Ascending aorta (tissue), 2 donors: ENCODE measurements at regions of chr19 and their contacts with region 1.

Region 1: DNA sequence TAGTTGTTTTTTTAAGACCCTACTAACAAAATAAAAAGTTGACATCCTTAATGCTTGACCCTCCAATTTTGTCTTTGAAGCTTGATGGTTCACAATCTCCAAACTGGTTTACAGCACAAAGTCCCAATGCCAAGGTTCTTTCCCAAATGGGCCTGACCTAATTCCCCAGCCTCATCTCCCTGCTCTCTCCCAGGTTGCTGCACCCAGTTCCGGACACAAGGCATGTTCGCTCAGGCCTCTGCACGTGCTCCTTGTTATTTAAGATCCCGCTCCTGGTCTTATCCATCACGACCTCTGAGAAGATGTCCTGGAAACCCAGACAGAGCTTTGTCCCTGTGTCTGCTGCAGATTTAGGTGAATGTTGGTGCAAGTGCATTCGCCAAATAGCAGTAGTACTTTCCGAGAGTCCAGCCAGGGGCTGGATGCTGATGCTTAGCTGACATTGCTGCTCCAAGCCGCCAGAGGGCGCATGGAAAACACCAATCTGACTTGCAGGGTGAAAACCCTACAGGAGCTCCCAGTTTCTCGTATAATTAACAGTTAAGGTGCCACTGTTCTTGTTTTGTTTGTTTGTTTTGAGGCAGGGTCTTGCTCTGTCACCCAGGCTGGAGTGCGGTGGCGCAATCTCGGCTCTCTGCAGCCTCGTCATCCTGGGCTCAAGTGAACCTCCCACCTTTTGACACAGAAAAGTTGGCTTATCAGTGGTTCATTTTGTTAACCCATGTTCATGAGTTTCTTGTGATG is 18.5 kb downstream of the LYPD3 start:
- DNase-seq: peak; percentile 18 to 76
- H3K4me3 ChIP-seq: no peak overlapping the region
- H3K27ac ChIP-seq: no peak overlapping the region
- H3K4me1 ChIP-seq: no peaks in the 10 kb centered on the region
- H3K27me3 ChIP-seq: no peaks in the 10 kb centered on the region
- CTCF ChIP-seq: peak; percentile 91 to 95 (median 93)

Region 2: GRCh38 chr19:43408043-43408442 is 38.9 kb before region 1 on chr19:
- intact Hi-C with region 1: no loop called
- DNase-seq: no peak
- H3K4me3 ChIP-seq: no peak overlapping the region
- H3K27ac ChIP-seq: no peak overlapping the region
- H3K4me1 ChIP-seq: no peaks in the 10 kb centered on the region
- H3K27me3 ChIP-seq: no peaks in the 10 kb centered on the region
- CTCF ChIP-seq: no peak

Region 3: GRCh38 chr19:43519436-43520088 is 72.6 kb after region 1 on chr19:
- intact Hi-C with region 1: loop called (anchors 1 kb)
- DNase-seq: peak in 1 of 2 donors; percentile 83
- H3K4me3 ChIP-seq: no peak overlapping the region
- H3K27ac ChIP-seq: no peak overlapping the region
- H3K4me1 ChIP-seq: peaks cover 0 to under 1% of the 10 kb centered on the region in 2 donors
- H3K27me3 ChIP-seq: no peaks in the 10 kb centered on the region
- CTCF ChIP-seq: peak; percentile 75 to 89 (median 85)

Region 4: GRCh38 chr19:43651758-43652545 is 205.0 kb after region 1 on chr19:
- intact Hi-C with region 1: loop called (anchors 10 kb)
- DNase-seq: no peak
- H3K4me3 ChIP-seq: no peak overlapping the region
- H3K27ac ChIP-seq: no peak overlapping the region
- H3K4me1 ChIP-seq: no peaks in the 10 kb centered on the region
- H3K27me3 ChIP-seq: no peaks in the 10 kb centered on the region
- CTCF ChIP-seq: peak; percentile 48 to 78 (median 49)

Region 5: GRCh38 chr19:43687660-43687997 is 240.7 kb after region 1 on chr19:
- intact Hi-C with region 1: no loop called
- DNase-seq: no peak
- H3K4me3 ChIP-seq: no peak overlapping the region
- H3K27ac ChIP-seq: no peak overlapping the region
- H3K4me1 ChIP-seq: no peaks in the 10 kb centered on the region
- H3K27me3 ChIP-seq: no peaks in the 10 kb centered on the region
- CTCF ChIP-seq: no peak